HepG2 (cell line): ENCODE measurements at regions of chr18 and their contacts with region 1.

Region 1: GRCh38 chr18:32470713-32471633 is at the start of gene GAREM1:
- DNase-seq: peak; percentile 87
- ATAC-seq: peak; percentile 95
- H3K4me3 ChIP-seq: peak within 1 kb of the TSS; percentile 76 to 88 (median 87)
- H3K27ac ChIP-seq: peak within 1 kb of the TSS; percentile 45
- H3K4me1 ChIP-seq: peaks cover 21% of the 10 kb centered on the region
- H3K27me3 ChIP-seq: no peaks in the 10 kb centered on the region; a peak in 3 of 5 replicates
- CTCF ChIP-seq: peak; percentile 81
- EP300 ChIP-seq: no peak
- POLR2A ChIP-seq: peak; percentile 80 to 86
- RAD21 ChIP-seq: peak; percentile 96
- total RNA-seq, gene GAREM1: 2.9 TPM in 2 replicates

Region 2: GRCh38 chr18:31990823-31991222 is 480.1 kb before region 1 on chr18:
- CTCF ChIA-PET with region 1: no interaction called
- POLR2A ChIA-PET with region 1: no interaction called
- in situ Hi-C with region 1: no loop called
- intact Hi-C with region 1: no loop called
- DNase-seq: no peak
- ATAC-seq: no peak
- H3K4me3 ChIP-seq: no peak overlapping the region
- H3K27ac ChIP-seq: no peak overlapping the region
- H3K4me1 ChIP-seq: peaks cover 6% of the 10 kb centered on the region; the same call in 1 of the 2 replicates
- H3K27me3 ChIP-seq: peaks cover 3 to 5% of the 10 kb centered on the region in 2 experiments; a peak in 2 of 5 replicates
- CTCF ChIP-seq: no peak
- EP300 ChIP-seq: no peak
- POLR2A ChIP-seq: no peak
- RAD21 ChIP-seq: no peak

Region 3: GRCh38 chr18:32271672-32272208 is 199.2 kb before region 1 on chr18:
- CTCF ChIA-PET with region 1: interaction called, 8 read pairs
- POLR2A ChIA-PET with region 1: interaction called, 4 read pairs
- in situ Hi-C with region 1: no loop called
- intact Hi-C with region 1: loop called (anchors 1 kb)
- DNase-seq: peak; percentile 36
- ATAC-seq: peak; percentile 90
- H3K4me3 ChIP-seq: no peak overlapping the region
- H3K27ac ChIP-seq: no peak overlapping the region
- H3K4me1 ChIP-seq: no peaks in the 10 kb centered on the region
- H3K27me3 ChIP-seq: no peaks in the 10 kb centered on the region
- CTCF ChIP-seq: peak; percentile 81
- EP300 ChIP-seq: no peak
- POLR2A ChIP-seq: no peak
- RAD21 ChIP-seq: peak; percentile 75

Region 4: DNA sequence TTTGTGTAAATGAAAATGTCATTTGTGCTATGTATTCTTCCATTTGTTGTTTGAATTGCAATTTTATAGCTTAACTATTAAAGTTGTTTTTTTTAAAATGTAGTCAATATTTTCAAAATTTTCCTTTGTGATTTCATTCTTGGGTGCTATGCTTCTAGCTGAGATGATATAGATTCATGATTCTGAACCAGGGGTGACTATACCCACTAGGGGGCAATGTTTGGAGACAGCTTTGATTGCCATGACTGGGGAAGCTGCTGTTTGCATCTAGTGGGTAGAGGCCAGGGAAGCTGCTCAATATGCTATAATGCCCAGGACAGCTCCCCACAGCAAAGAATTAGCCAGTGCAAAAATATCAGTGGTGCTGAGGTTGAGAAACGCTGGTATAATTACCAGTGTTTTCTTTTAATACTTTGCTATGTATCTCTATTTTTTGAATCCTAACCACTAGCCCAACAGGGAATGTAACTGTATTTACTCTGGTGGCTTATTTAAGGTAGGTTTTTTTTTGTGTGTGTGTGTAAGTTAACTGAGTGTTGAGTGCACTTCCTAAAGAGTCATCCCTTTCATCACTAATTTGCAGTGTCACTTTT is 181.4 kb before region 1 on chr18:
- CTCF ChIA-PET with region 1: interaction called, 18 read pairs
- POLR2A ChIA-PET with region 1: interaction called, 9 read pairs
- in situ Hi-C with region 1: loop called (anchors 5 kb)
- intact Hi-C with region 1: loop called (anchors 1 kb)
- DNase-seq: peak; percentile 66
- ATAC-seq: peak; percentile 95
- H3K4me3 ChIP-seq: no peak overlapping the region
- H3K27ac ChIP-seq: no peak overlapping the region
- H3K4me1 ChIP-seq: no peaks in the 10 kb centered on the region
- H3K27me3 ChIP-seq: no peaks in the 10 kb centered on the region
- CTCF ChIP-seq: peak; percentile 75
- EP300 ChIP-seq: no peak
- POLR2A ChIP-seq: no peak
- RAD21 ChIP-seq: peak; percentile 70

Region 5: DNA sequence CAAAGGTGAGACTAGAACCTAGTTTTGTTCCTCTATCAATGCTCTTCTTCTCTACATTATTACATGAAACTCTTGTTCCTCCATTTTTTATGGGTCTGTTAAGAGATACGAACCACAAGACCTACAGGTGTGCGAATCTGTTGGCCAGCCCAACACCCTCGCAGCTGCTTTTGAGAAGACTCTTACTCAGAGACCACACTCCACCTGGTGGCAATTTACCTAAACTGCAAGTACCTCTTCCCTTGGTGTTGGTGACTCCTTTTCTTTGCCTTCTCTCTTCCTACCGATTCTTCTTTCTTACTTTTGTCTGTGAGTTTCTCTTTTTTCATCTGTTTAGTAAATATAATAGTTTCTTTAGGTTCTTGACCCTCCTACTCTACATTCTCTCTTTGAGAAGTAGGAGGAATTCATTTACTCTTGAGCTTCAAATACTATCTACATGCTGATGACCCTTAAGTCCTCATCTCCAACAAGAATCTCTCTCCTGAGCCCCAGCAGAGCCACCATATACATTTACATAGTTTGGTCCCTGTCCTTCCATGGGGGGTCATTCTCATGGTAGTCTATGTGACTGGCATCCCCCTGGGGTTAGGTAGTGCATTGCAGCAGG is 81.6 kb after region 1 on chr18:
- CTCF ChIA-PET with region 1: no interaction called
- POLR2A ChIA-PET with region 1: no interaction called
- in situ Hi-C with region 1: no loop called
- intact Hi-C with region 1: loop called (anchors 2 kb)
- DNase-seq: peak; percentile 68
- ATAC-seq: peak; percentile 85
- H3K4me3 ChIP-seq: no peak overlapping the region
- H3K27ac ChIP-seq: no peak overlapping the region
- H3K4me1 ChIP-seq: no peaks in the 10 kb centered on the region
- H3K27me3 ChIP-seq: no peaks in the 10 kb centered on the region; a peak in 2 of 5 replicates
- CTCF ChIP-seq: peak; percentile 79
- EP300 ChIP-seq: no peak
- POLR2A ChIP-seq: no peak
- RAD21 ChIP-seq: peak; percentile 45; the same call in 1 of the 2 replicates